ENCODE measurements at regions of chr1 and their contacts with region 1.

Region 1: GRCh38 chr1:109984456-109985275 is at the start of gene AHCYL1:
- DNase-seq: peak; percentile 100
- H3K4me3 ChIP-seq: peak within 1 kb of the TSS; percentile 65 to 94 (median 75)
- H3K27ac ChIP-seq: peak within 1 kb of the TSS; percentile 94 to 98 (median 96)
- H3K4me1 ChIP-seq: peaks cover 0 to 60% (median 47%) of the 10 kb centered on the region in 4 donors
- H3K27me3 ChIP-seq: no peaks in the 10 kb centered on the region
- CTCF ChIP-seq: peak; percentile 94 to 99 (median 98)
- EP300 ChIP-seq: peak in 2 of 4 donors; percentile 48 to 53
- POLR2A ChIP-seq: peak; percentile 97
- total RNA-seq, gene AHCYL1: 58.2 to 76.7 (median 73.4) TPM

Region 2: GRCh38 chr1:109643385-109644230 is 341.1 kb before region 1 on chr1:
- intact Hi-C with region 1: loop called (anchors 5 kb)
- DNase-seq: peak; percentile 92
- H3K4me3 ChIP-seq: peak overlapping the region in 1 of 4 donors; percentile 6
- H3K27ac ChIP-seq: peak overlapping the region in 1 of 4 donors; percentile 30
- H3K4me1 ChIP-seq: peaks cover 0 to 10% (median 8%) of the 10 kb centered on the region in 4 donors
- H3K27me3 ChIP-seq: no peaks in the 10 kb centered on the region
- CTCF ChIP-seq: peak; percentile 75 to 91 (median 86)
- EP300 ChIP-seq: no peak
- POLR2A ChIP-seq: no peak

Region 3: GRCh38 chr1:109773146-109773899 is 211.3 kb before region 1 on chr1:
- intact Hi-C with region 1: loop called (anchors 1 kb)
- DNase-seq: peak; percentile 94
- H3K4me3 ChIP-seq: no peak overlapping the region
- H3K27ac ChIP-seq: no peak overlapping the region
- H3K4me1 ChIP-seq: peaks cover 0 to 18% (median 9%) of the 10 kb centered on the region in 4 donors
- H3K27me3 ChIP-seq: no peaks in the 10 kb centered on the region
- CTCF ChIP-seq: peak; percentile 80 to 96 (median 88)
- EP300 ChIP-seq: no peak
- POLR2A ChIP-seq: no peak

Region 4: GRCh38 chr1:109910123-109910962 is 74.3 kb before region 1 on chr1 and contains the start of gene CSF1:
- intact Hi-C with region 1: loop called (anchors 5 kb)
- DNase-seq: peak; percentile 95
- H3K4me3 ChIP-seq: peak within 1 kb of the TSS; percentile 83 to 92 (median 88)
- H3K27ac ChIP-seq: peak within 1 kb of the TSS; percentile 78 to 91 (median 88)
- H3K4me1 ChIP-seq: peaks cover 0 to 54% (median 49%) of the 10 kb centered on the region in 4 donors
- H3K27me3 ChIP-seq: no peaks in the 10 kb centered on the region
- CTCF ChIP-seq: no peak
- EP300 ChIP-seq: peak in 1 of 4 donors; percentile 33
- POLR2A ChIP-seq: peak; percentile 29 to 60
- total RNA-seq, gene CSF1: 21.8 to 118 (median 47.5) TPM

Region 5: DNA sequence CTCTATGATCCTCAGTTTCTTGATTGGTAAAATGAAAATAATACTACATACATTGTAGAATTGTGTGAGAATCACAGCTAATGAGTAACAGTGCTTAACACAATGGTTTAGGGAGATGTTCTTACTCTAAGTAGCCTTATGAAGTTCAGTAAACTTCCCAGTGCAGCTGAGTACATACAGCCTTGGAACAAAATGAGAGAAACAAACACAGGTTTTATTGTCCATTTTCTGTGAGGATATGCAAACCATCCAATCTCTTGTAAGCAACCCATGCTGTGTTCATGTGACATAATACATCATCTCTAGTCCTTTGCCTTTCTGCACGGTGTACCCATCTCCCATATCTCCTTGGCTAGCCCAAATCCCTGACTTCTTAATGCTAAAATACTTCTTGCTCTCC is 35.1 kb after region 1 on chr1:
- intact Hi-C with region 1: no loop called
- DNase-seq: no peak
- H3K4me3 ChIP-seq: no peak overlapping the region
- H3K27ac ChIP-seq: no peak overlapping the region
- H3K4me1 ChIP-seq: no peaks in the 10 kb centered on the region
- H3K27me3 ChIP-seq: no peaks in the 10 kb centered on the region
- CTCF ChIP-seq: no peak
- EP300 ChIP-seq: no peak
- POLR2A ChIP-seq: no peak

Region 6: GRCh38 chr1:110034451-110035235 is 50.0 kb after region 1 on chr1 and contains the start of gene STRIP1:
- intact Hi-C with region 1: loop called (anchors 2 kb)
- DNase-seq: peak; percentile 96
- H3K4me3 ChIP-seq: peak within 1 kb of the TSS; percentile 89 to 98 (median 94)
- H3K27ac ChIP-seq: peak within 1 kb of the TSS; percentile 92 to 95 (median 92)
- H3K4me1 ChIP-seq: peaks cover 0 to 34% (median 15%) of the 10 kb centered on the region in 4 donors
- H3K27me3 ChIP-seq: no peaks in the 10 kb centered on the region
- CTCF ChIP-seq: no peak
- EP300 ChIP-seq: no peak
- POLR2A ChIP-seq: no peak
- total RNA-seq, gene STRIP1: 32.8 to 47.8 (median 36.1) TPM